Tibial artery (tissue), 4 donors: ENCODE measurements at regions of chr1 and their contacts with region 1.

Region 1: DNA sequence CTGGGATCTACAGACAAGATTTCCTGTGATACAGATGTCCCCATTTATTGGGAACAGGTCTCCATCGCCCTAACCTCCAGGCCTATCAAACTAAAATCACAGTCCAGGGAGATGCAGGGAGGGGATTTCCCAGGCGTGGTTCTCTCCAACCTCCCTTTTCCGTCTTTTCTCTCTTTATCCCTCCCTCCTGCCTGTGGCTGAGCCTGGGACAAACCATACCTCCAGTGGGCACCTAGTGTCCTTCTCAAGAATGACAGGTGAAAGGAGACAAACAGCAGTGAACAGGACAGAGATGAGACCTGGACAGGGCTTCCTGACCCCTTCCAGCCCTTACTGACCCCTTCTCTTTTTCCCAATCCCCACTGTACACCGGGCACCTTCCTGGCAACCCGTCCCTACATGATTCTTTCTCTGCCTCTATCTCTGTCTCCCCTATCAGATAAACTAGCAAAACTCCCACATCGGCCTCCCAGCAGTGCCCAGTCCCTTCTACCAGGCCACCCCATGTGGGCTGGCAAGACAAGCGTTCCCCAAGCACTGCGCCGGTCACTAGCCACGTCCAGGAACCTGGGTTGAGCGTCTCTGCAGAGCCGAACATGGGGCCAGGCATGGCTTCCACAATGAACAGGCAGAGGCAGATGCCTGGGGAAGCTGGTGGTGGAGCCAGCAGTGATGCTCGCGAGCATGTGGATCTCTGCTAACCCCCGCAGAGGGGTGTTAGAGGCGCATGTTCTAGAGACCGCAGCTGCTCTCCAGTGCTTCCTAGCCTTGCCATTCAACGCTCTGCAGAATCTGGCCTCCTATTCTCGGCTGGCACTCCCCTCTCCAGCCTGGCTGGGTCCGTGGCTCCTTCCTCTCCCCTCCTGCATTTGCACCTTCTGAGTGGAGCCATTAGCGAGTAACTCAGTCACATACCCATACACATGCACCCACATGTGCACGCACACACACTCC is 54.7 kb downstream of the ELK4 start:
- DNase-seq: no peak
- H3K4me3 ChIP-seq: no peak overlapping the region
- H3K27ac ChIP-seq: no peak overlapping the region
- H3K4me1 ChIP-seq: no peaks in the 10 kb centered on the region
- H3K27me3 ChIP-seq: peaks cover 0 to 43% of the 10 kb centered on the region in 2 donors
- CTCF ChIP-seq: no peak

Region 2: GRCh38 chr1:205477759-205478247 is 99.3 kb before region 1 on chr1:
- intact Hi-C with region 1: no loop called
- DNase-seq: peak in 1 of 2 donors; percentile 77
- H3K4me3 ChIP-seq: no peak overlapping the region
- H3K27ac ChIP-seq: no peak overlapping the region
- H3K4me1 ChIP-seq: peaks cover 0 to 15% (median 9%) of the 10 kb centered on the region in 4 donors
- H3K27me3 ChIP-seq: peaks cover 0 to 71% of the 10 kb centered on the region in 2 donors
- CTCF ChIP-seq: no peak

Region 3: GRCh38 chr1:205620269-205620668 is 43.2 kb after region 1 on chr1:
- intact Hi-C with region 1: loop called (anchors 2 kb)
- DNase-seq: no peak
- H3K4me3 ChIP-seq: no peak overlapping the region
- H3K27ac ChIP-seq: no peak overlapping the region
- H3K4me1 ChIP-seq: peaks cover 0 to 2% (median 0%) of the 10 kb centered on the region in 4 donors
- H3K27me3 ChIP-seq: no peaks in the 10 kb centered on the region
- CTCF ChIP-seq: no peak